Right cardiac atrium (tissue), 5 donors: ENCODE measurements at regions of chr1 and their contacts with region 1.

Region 1: DNA sequence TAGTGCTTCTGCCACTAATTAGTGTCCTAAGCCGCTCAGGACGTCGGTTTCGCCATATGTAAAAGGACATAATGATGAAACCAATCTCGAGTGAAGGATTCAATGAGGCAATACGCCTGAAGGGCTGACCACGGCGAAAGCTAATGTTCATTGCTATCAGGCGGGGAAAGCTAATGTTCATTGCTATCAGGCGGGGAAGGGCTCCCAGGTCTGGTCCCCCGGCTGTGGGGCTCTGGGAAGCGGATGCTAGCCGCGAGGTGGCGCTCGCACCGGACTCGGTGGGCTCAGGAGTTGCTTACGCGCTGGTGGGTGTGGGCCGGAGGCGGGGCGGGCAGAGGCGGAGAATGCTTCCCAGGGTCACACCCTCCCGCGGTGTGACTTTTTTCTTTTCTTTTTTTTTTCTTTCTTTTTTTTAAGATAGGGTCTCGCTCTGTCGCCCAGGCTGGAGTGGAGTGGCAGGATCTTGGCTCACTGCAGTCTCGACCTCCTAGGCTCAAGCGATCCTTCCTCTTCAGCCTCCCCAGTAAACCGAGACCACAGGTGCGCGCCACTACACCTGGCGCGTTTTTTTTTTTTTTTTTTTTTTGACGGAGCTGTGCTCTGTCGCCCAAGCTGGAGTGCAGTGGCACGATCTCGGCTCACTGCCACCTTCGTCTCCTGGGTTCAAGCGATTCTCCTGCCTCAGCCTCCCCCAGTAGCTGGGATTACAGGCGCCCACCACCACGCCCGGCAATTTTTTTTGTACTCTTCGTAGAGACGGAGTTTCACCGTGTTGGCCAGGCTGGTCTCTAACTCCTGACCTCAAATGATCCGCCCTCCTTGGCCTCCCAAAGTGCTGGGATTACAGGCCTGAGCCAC is 1.1 kb upstream of the PEAR1 start:
- DNase-seq: peak; percentile 96 to 98 (median 98)
- ATAC-seq: peak; percentile 89 to 90
- H3K4me3 ChIP-seq: peak overlapping the region; percentile 24
- H3K27ac ChIP-seq: peak overlapping the region; percentile 31
- H3K4me1 ChIP-seq: no peaks in the 10 kb centered on the region
- H3K27me3 ChIP-seq: no peaks in the 10 kb centered on the region

Region 2: DNA sequence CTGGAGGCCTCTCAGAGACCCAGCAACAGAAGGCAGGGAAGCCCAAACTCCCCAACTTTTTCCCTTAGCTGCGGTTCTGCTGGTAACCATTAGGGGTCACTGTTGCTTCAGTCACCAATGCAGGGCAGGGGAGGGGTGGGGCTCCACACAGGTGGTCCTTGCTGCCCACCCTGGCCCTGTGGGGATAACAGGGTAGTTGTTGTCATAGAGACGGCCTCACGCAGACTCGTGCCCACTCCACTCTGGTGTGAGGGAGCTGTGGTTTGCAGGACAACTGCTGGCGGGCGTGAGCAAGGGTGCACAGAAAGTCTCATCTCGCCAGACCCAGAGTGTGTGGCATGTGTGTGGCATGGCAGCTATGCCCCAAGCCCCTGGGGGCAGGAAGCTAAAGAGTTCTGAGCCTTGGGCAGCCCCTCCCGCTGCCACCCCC is 53.4 kb before region 1 on chr1:
- intact Hi-C with region 1: loop called in 1 of 4 experiments (anchors 1 kb)
- DNase-seq: no peak
- ATAC-seq: peak; percentile 32 to 37
- H3K4me3 ChIP-seq: no peak overlapping the region
- H3K27ac ChIP-seq: no peak overlapping the region
- H3K4me1 ChIP-seq: no peaks in the 10 kb centered on the region
- H3K27me3 ChIP-seq: no peaks in the 10 kb centered on the region

Region 3: DNA sequence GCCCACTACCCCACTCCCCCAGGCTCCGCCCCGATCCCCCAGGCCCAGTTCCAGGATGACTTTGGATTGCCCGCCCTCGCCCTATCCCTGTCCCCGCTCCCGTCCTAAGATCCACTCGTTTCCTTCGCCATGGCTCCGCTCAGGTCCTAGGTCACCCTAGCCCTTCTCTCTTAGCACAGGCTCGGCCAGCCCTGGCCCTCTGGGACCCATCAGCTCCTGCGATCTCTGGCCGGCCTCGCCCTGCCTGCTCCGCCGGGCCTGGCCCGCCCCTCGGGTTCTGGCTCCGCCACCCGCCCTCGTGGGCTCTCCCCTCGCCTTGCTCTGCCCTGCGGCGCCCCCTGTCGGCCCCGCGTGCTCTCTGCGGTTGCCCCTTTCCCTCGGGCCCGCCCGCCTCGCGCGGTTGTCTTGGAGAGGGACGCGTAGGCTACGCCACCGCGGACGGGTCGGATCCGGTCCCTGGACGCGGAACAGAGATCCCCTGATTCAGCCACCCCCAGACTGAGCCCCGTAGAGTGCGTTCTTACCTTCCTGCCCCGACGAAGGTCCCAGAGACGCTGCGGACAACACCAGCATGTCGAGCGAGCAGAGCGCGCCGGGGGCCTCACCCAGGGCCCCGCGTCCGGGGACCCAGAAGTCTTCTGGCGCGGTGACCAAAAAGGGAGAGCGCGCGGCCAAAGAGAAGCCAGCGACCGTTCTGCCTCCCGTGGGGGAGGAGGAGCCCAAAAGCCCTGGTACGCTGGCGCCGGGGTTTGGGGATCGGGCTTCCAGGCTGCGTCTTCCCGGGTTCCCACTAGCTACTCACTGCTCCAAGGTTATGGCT is 28.0 kb after region 1 on chr1 and contains the start of gene LRRC71:
- intact Hi-C with region 1: loop called in 2 of 4 experiments (anchors 2 to 5 kb)
- DNase-seq: peak; percentile 89 to 95 (median 95)
- ATAC-seq: peak; percentile 95
- H3K4me3 ChIP-seq: no peak within 1 kb of the TSS
- H3K27ac ChIP-seq: no peak within 1 kb of the TSS
- H3K4me1 ChIP-seq: no peaks in the 10 kb centered on the region
- H3K27me3 ChIP-seq: peaks cover 3% of the 10 kb centered on the region
- total RNA-seq, gene LRRC71: 0.31 TPM in 1 of 4 donors, not detected in the others

Region 4: GRCh38 chr1:156927215-156928042 is 35.0 kb after region 1 on chr1:
- intact Hi-C with region 1: loop called in 1 of 4 experiments (anchors 5 kb)
- DNase-seq: peak; percentile 77 to 90 (median 88)
- ATAC-seq: peak; percentile 53 to 69
- H3K4me3 ChIP-seq: no peak overlapping the region
- H3K27ac ChIP-seq: no peak overlapping the region
- H3K4me1 ChIP-seq: no peaks in the 10 kb centered on the region
- H3K27me3 ChIP-seq: no peaks in the 10 kb centered on the region